ENCODE measurements at regions of chr4 and their contacts with region 1.

Region 1: GRCh38 chr4:183444214-183445066 is at the start of gene CDKN2AIP:
- DNase-seq: peak; percentile 78 to 90
- H3K4me3 ChIP-seq: peak within 1 kb of the TSS; percentile 73 to 88 (median 79)
- H3K27ac ChIP-seq: peak within 1 kb of the TSS; percentile 90
- H3K4me1 ChIP-seq: peaks cover 0 to 5% (median 0%) of the 10 kb centered on the region in 4 experiments; a peak in 2 of 7 replicates
- H3K27me3 ChIP-seq: no peaks in the 10 kb centered on the region
- CTCF ChIP-seq: no peak
- EP300 ChIP-seq: peak in 1 of 2 experiments; percentile 23; a peak in 1 of 3 replicates
- POLR2A ChIP-seq: peak; percentile 78 to 89
- RAD21 ChIP-seq: no peak
- total RNA-seq, gene CDKN2AIP: 14.0 and 14.8 TPM in 2 replicates

Region 2: GRCh38 chr4:183430317-183430993 is 14.0 kb before region 1 on chr4:
- CTCF ChIA-PET with region 1: interaction called, 7 read pairs
- POLR2A ChIA-PET with region 1: interaction called, 17 read pairs
- DNase-seq: peak in 1 of 2 experiments; percentile 58
- H3K4me3 ChIP-seq: no peak overlapping the region
- H3K27ac ChIP-seq: peak overlapping the region; percentile 27; the same call in 1 of the 2 replicates
- H3K4me1 ChIP-seq: peaks cover 0 to 6% (median 0%) of the 10 kb centered on the region in 4 experiments; a peak in 2 of 7 replicates
- H3K27me3 ChIP-seq: no peaks in the 10 kb centered on the region
- CTCF ChIP-seq: peak in 1 of 3 experiments; percentile 36; a peak in 1 of 4 replicates
- EP300 ChIP-seq: no peak
- POLR2A ChIP-seq: no peak
- RAD21 ChIP-seq: no peak

Region 3: GRCh38 chr4:183455431-183456195 is 11.2 kb after region 1 on chr4:
- CTCF ChIA-PET with region 1: interaction called, 3 read pairs
- POLR2A ChIA-PET with region 1: interaction called, 20 read pairs
- DNase-seq: no peak
- H3K4me3 ChIP-seq: no peak overlapping the region
- H3K27ac ChIP-seq: no peak overlapping the region
- H3K4me1 ChIP-seq: no peaks in the 10 kb centered on the region
- H3K27me3 ChIP-seq: no peaks in the 10 kb centered on the region
- CTCF ChIP-seq: no peak
- EP300 ChIP-seq: no peak
- POLR2A ChIP-seq: no peak
- RAD21 ChIP-seq: no peak

Region 4: GRCh38 chr4:183504064-183504929 is 59.9 kb after region 1 on chr4:
- CTCF ChIA-PET with region 1: no interaction called
- POLR2A ChIA-PET with region 1: interaction called, 22 read pairs
- DNase-seq: peak; percentile 91 to 99
- H3K4me3 ChIP-seq: peak overlapping the region; percentile 73 to 100 (median 90)
- H3K27ac ChIP-seq: peak overlapping the region; percentile 95
- H3K4me1 ChIP-seq: peaks cover 0 to 5% (median 1%) of the 10 kb centered on the region in 4 experiments; a peak in 2 of 7 replicates
- H3K27me3 ChIP-seq: no peaks in the 10 kb centered on the region
- CTCF ChIP-seq: peak in 1 of 3 experiments; percentile 1; a peak in 1 of 4 replicates
- EP300 ChIP-seq: 0 out of 3 replicates have a peak, but pooled peaks of 1 of the 2 experiments have one; percentile 48
- POLR2A ChIP-seq: peak; percentile 77 to 83
- RAD21 ChIP-seq: peak; percentile 7 to 37; a peak in 3 of 4 replicates

Region 5: DNA sequence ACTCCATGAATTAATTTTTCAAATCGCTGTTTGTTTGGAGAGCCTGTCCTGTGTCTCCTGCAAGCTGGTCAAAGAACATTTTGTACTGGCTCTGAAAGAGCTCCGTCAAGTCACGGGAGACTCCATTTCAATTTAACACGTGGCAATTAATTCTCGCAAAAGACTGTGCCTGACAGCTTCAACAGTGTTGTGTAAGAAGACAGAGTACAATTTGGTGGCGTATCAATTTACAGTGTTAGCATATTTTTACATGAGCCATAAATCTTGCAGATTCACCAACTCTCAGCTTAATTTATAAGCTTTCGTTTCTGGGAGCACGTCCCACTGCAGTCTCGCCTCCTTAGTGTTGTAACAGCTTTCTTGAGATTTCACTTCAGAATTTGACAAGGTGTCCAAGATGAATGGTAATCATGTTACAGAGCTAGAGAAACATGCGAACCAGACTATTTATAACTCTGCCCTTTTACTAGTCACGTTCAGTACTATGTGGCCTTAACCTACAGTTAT is 143.8 kb after region 1 on chr4:
- CTCF ChIA-PET with region 1: no interaction called
- POLR2A ChIA-PET with region 1: no interaction called
- DNase-seq: no peak
- H3K4me3 ChIP-seq: no peak overlapping the region
- H3K27ac ChIP-seq: no peak overlapping the region
- H3K4me1 ChIP-seq: no peaks in the 10 kb centered on the region
- H3K27me3 ChIP-seq: no peaks in the 10 kb centered on the region
- CTCF ChIP-seq: no peak
- EP300 ChIP-seq: no peak
- POLR2A ChIP-seq: no peak
- RAD21 ChIP-seq: no peak